K562 (cell line): ENCODE measurements at regions of chr15 and their contacts with region 1.

Region 1: GRCh38 chr15:101258238-101259144 is 6.6 kb upstream of the CHSY1 start:
- DNase-seq: peak; percentile 37 to 77 (median 43)
- ATAC-seq: peak; percentile 65
- H3K4me3 ChIP-seq: no peak overlapping the region
- H3K27ac ChIP-seq: no peak overlapping the region
- H3K4me1 ChIP-seq: peaks cover 5 to 18% of the 10 kb centered on the region in 2 experiments
- H3K27me3 ChIP-seq: peaks cover 3 to 13% of the 10 kb centered on the region in 2 experiments; a peak in 3 of 5 replicates
- CTCF ChIP-seq: peak; percentile 83 to 97 (median 84)
- EP300 ChIP-seq: no peak
- POLR2A ChIP-seq: no peak
- RAD21 ChIP-seq: peak; percentile 95 to 98

Region 2: GRCh38 chr15:100918034-100918689 is 340.3 kb before region 1 on chr15:
- CTCF ChIA-PET with region 1: no interaction called
- POLR2A ChIA-PET with region 1: no interaction called
- in situ Hi-C with region 1: loop called (anchors 25 kb)
- intact Hi-C with region 1: loop called (anchors 5 kb)
- DNase-seq: peak; percentile 69 to 80 (median 76)
- ATAC-seq: peak; percentile 99
- H3K4me3 ChIP-seq: no peak overlapping the region
- H3K27ac ChIP-seq: no peak overlapping the region
- H3K4me1 ChIP-seq: peaks cover 0 to 20% of the 10 kb centered on the region in 2 experiments; a peak in 2 of 5 replicates
- H3K27me3 ChIP-seq: peaks cover 24 to 58% of the 10 kb centered on the region in 2 experiments
- CTCF ChIP-seq: peak; percentile 85 to 97 (median 85)
- EP300 ChIP-seq: no peak
- POLR2A ChIP-seq: no peak
- RAD21 ChIP-seq: peak; percentile 44 to 73; a peak in 3 of 4 replicates

Region 3: DNA sequence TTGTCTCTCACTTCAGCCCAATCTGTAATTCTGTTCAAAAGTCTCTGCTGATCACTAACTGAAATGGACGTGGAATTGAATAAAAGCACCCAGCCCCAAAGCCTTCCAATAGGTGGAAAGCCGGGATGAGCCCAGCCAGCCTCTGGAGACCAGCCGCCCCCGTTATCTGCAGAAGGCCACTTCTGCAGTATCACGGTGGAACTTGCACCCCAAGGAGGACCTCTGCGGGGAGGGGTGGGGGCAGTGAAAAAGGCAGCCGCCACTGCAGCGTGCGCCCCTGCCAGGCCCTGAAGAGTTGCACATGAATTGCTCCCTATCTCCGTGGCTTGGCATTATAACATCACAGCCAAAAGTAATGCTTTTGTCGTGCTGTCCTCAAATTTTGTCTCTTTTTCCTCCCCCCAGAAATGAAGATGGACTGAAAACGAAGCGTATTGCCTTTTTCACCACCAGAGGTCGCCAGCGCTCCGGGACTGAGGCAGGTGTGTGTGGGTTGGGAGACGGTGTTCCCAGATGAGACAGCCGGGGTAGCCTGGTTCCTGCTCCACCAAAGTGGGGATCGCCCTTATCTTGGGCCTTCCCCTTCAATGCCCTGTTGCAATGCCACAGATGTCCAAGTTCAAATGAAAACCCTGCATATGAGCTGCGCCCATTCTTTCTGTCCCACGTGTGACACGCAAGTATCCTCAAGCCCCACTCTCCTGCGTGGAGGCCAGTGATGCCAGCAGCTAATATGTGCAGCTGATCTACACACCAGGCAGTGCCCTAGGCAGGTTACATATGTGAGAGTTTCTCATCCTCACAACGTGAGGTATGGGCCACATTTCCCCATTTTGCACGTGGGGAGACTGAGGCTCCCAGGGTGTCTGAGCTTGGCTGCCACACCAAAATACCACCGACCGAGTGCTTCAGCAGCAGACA is 243.3 kb before region 1 on chr15:
- CTCF ChIA-PET with region 1: interaction called, 47 read pairs
- POLR2A ChIA-PET with region 1: no interaction called
- in situ Hi-C with region 1: loop called (anchors 5 kb)
- intact Hi-C with region 1: loop called (anchors 1 kb)
- DNase-seq: peak; percentile 80 to 82 (median 82)
- ATAC-seq: peak; percentile 89
- H3K4me3 ChIP-seq: no peak overlapping the region
- H3K27ac ChIP-seq: no peak overlapping the region
- H3K4me1 ChIP-seq: peaks cover 0 to 11% of the 10 kb centered on the region in 2 experiments; a peak in 3 of 5 replicates
- H3K27me3 ChIP-seq: peaks cover 8 to 30% of the 10 kb centered on the region in 2 experiments; a peak in 4 of 5 replicates
- CTCF ChIP-seq: peak; percentile 87 to 93 (median 92)
- EP300 ChIP-seq: no peak
- POLR2A ChIP-seq: no peak
- RAD21 ChIP-seq: peak; percentile 89 to 94

Region 4: DNA sequence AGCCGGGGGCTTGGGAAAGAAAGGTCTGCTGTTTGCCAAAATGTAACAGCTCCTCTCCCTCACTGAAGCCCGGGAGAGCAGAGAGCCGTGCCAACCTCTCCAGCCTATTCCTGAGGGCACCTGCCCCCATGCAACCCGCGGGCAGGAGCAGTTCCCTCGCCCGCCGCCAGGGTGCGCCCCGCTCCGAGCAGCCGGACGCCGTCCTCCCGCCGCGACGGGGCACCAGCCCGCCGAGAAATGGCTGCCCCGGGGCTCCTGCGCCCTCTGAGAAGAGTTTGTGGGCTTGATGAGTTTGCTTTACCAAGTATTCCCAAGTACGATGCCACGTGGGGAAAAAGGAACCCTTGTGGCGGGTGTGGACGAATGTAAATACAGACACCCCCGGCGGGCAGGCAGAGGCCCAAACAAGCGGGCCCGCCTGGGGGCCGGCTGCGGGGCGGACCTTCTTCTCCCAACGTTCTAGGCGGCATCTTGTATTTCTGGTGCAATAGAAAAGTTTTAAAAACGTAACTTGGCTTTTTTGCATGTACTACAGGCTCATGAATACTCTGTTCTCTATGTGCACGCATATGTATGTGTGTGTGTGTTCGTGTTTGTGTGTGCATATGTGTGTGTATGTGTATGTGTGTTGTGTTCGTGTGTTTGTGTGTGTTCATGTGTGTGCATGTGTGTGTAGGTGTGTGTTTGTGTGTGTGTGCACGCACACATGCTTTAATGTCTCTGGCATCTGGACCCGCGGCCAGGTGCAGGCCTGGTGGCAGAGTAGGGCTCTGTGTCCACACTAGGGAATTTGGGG is 169.5 kb before region 1 on chr15:
- CTCF ChIA-PET with region 1: interaction called, 29 read pairs
- POLR2A ChIA-PET with region 1: interaction called, 4 read pairs
- in situ Hi-C with region 1: loop called (anchors 5 kb)
- intact Hi-C with region 1: loop called (anchors 1 kb)
- DNase-seq: peak; percentile 70 to 77 (median 74)
- ATAC-seq: peak; percentile 71
- H3K4me3 ChIP-seq: no peak overlapping the region
- H3K27ac ChIP-seq: no peak overlapping the region
- H3K4me1 ChIP-seq: peaks cover 11 to 39% of the 10 kb centered on the region in 2 experiments; a peak in 4 of 5 replicates
- H3K27me3 ChIP-seq: peaks cover 2 to 18% of the 10 kb centered on the region in 2 experiments; a peak in 3 of 5 replicates
- CTCF ChIP-seq: peak; percentile 87 to 96 (median 94)
- EP300 ChIP-seq: no peak
- POLR2A ChIP-seq: no peak
- RAD21 ChIP-seq: peak; percentile 86 to 91

Region 5: DNA sequence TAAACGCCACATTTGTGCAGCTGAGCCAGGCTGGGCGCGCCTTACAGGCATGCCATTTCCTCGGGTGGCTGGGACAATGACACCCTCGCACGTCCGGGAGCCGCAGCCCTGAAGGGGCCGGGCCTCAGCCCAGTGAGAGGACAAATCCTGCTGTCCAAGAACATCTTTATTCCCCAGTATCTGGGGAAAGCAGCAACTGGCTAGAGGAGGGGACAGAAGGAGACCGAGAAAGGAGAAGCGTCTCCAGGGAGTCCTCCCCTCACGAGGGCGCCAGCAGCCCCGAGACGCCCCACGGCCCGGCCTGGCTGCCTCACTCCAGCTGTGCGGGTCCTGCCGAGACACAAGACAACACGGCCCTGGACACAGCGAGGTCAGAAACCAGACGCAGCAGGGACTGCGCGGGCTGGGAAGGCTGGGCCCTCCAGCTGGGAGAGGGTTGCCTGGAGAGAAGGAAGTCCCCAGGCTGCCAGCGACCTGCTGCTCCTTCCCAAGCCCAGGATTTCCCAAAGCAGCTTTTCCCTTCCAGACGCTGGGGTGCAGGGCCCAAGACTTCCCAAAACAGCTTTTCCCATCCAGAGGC is 136.9 kb before region 1 on chr15:
- CTCF ChIA-PET with region 1: interaction called, 3 read pairs
- POLR2A ChIA-PET with region 1: no interaction called
- in situ Hi-C with region 1: no loop called
- intact Hi-C with region 1: loop called (anchors 1 kb)
- DNase-seq: peak; percentile 47 to 71 (median 56)
- ATAC-seq: peak; percentile 97
- H3K4me3 ChIP-seq: no peak overlapping the region
- H3K27ac ChIP-seq: no peak overlapping the region
- H3K4me1 ChIP-seq: peaks cover 5 to 17% of the 10 kb centered on the region in 2 experiments; a peak in 4 of 5 replicates
- H3K27me3 ChIP-seq: no peaks in the 10 kb centered on the region
- CTCF ChIP-seq: peak; percentile 49 to 65 (median 64)
- EP300 ChIP-seq: no peak
- POLR2A ChIP-seq: no peak
- RAD21 ChIP-seq: peak; percentile 50 to 77

Region 6: GRCh38 chr15:101135532-101136166 is 122.8 kb before region 1 on chr15:
- CTCF ChIA-PET with region 1: no interaction called
- POLR2A ChIA-PET with region 1: no interaction called
- in situ Hi-C with region 1: no loop called
- intact Hi-C with region 1: loop called (anchors 2 kb)
- DNase-seq: no peak
- ATAC-seq: no peak
- H3K4me3 ChIP-seq: no peak overlapping the region
- H3K27ac ChIP-seq: no peak overlapping the region
- H3K4me1 ChIP-seq: peaks cover 17 to 32% of the 10 kb centered on the region in 2 experiments; a peak in 4 of 5 replicates
- H3K27me3 ChIP-seq: peaks cover 0 to 7% of the 10 kb centered on the region in 2 experiments; a peak in 3 of 5 replicates
- CTCF ChIP-seq: no peak
- EP300 ChIP-seq: no peak
- POLR2A ChIP-seq: no peak
- RAD21 ChIP-seq: no peak

Region 7: GRCh38 chr15:101445562-101446517 is 187.3 kb after region 1 on chr15:
- CTCF ChIA-PET with region 1: no interaction called
- POLR2A ChIA-PET with region 1: no interaction called
- in situ Hi-C with region 1: no loop called
- intact Hi-C with region 1: no loop called
- DNase-seq: peak in 3 of 4 experiments; percentile 26 to 70 (median 27)
- ATAC-seq: peak; percentile 81
- H3K4me3 ChIP-seq: no peak overlapping the region
- H3K27ac ChIP-seq: peak overlapping the region; percentile 78; the same call in 2 of the 3 replicates
- H3K4me1 ChIP-seq: peaks cover 31 to 34% of the 10 kb centered on the region in 2 experiments
- H3K27me3 ChIP-seq: no peaks in the 10 kb centered on the region
- CTCF ChIP-seq: no peak
- EP300 ChIP-seq: peak; percentile 93
- POLR2A ChIP-seq: no peak
- RAD21 ChIP-seq: peak in 1 of 2 experiments; percentile 10; a peak in 1 of 4 replicates